ENCODE measurements at regions of chr2 and their contacts with region 1.

Region 1: GRCh38 chr2:197705121-197705911 is at the start of gene MARS2:
- DNase-seq: peak; percentile 92
- H3K4me3 Mint-ChIP-seq: peak within 1 kb of the TSS; percentile 72
- H3K27ac Mint-ChIP-seq: peak within 1 kb of the TSS; percentile 80
- H3K4me1 Mint-ChIP-seq: peaks cover 37% of the 10 kb centered on the region
- H3K27me3 Mint-ChIP-seq: no peaks in the 10 kb centered on the region
- total RNA-seq, gene MARS2: 7.5 to 8.8 TPM

Region 2: GRCh38 chr2:196639180-196640030 is 1065.9 kb before region 1 on chr2 and contains the start of gene CCDC150:
- CTCF ChIA-PET with region 1: no interaction called
- intact Hi-C with region 1: loop called (anchors 1 kb)
- DNase-seq: peak; percentile 97
- H3K4me3 Mint-ChIP-seq: peak within 1 kb of the TSS; percentile 92
- H3K27ac Mint-ChIP-seq: peak within 1 kb of the TSS; percentile 48
- H3K4me1 Mint-ChIP-seq: peaks cover 11% of the 10 kb centered on the region
- H3K27me3 Mint-ChIP-seq: peaks cover 1% of the 10 kb centered on the region
- total RNA-seq, gene CCDC150: 10.1 to 10.8 TPM

Region 3: DNA sequence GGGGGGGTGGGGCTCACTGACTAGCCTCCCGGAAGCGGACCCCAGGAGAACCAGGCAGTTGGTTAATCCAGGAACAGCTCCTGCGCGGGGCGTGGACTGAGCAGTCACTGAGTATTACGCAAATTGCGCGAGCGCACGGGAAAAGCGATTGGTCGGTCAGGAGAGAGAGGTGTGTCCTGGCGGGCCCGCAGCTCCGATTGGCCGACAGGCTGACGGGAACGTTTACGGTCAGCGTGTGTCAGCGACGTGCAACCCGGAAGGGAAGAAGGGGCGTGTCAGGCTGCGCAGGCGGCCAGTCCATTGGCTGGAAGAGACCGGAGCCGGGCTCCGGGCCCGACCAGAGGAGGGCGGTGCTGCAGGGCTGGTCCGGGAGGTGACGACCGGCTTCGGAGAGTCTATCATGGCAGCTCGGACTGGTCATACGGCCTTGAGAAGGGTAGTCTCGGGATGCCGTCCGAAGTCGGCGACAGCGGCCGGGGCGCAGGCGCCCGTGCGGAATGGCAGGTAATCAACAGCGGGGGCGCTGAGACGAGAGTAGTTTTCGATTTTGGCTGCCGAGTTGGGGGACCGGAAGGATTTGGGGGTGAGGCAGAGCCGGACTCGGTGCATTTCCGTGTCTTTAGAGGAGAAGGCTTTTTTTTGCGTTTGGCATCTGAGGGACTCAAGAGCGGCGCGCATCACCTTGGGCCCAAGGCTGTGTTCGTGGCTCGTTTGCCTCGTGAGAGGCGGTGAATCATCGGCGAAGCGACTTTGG is 252.0 kb before region 1 on chr2 and contains the start of gene COQ10B:
- CTCF ChIA-PET with region 1: no interaction called
- intact Hi-C with region 1: loop called (anchors 1 kb)
- DNase-seq: peak; percentile 99
- H3K4me3 Mint-ChIP-seq: peak within 1 kb of the TSS; percentile 100
- H3K27ac Mint-ChIP-seq: peak within 1 kb of the TSS; percentile 100
- H3K4me1 Mint-ChIP-seq: peaks cover 45% of the 10 kb centered on the region
- H3K27me3 Mint-ChIP-seq: no peaks in the 10 kb centered on the region
- total RNA-seq, gene COQ10B: 17.5 to 17.8 TPM

Region 4: GRCh38 chr2:197777823-197778407 is 72.6 kb after region 1 on chr2:
- CTCF ChIA-PET with region 1: interaction called, 22 read pairs
- intact Hi-C with region 1: loop called (anchors 1 kb)
- DNase-seq: peak; percentile 52
- H3K4me3 Mint-ChIP-seq: no peak overlapping the region
- H3K27ac Mint-ChIP-seq: no peak overlapping the region
- H3K4me1 Mint-ChIP-seq: no peaks in the 10 kb centered on the region
- H3K27me3 Mint-ChIP-seq: peaks cover 5% of the 10 kb centered on the region

Region 5: GRCh38 chr2:197851451-197851850 is 146.1 kb after region 1 on chr2:
- CTCF ChIA-PET with region 1: no interaction called
- intact Hi-C with region 1: loop called (anchors 5 kb)
- DNase-seq: peak; percentile 52
- H3K4me3 Mint-ChIP-seq: no peak overlapping the region
- H3K27ac Mint-ChIP-seq: no peak overlapping the region
- H3K4me1 Mint-ChIP-seq: peaks cover 89% of the 10 kb centered on the region
- H3K27me3 Mint-ChIP-seq: no peaks in the 10 kb centered on the region

Region 6: GRCh38 chr2:198127627-198128026 is 422.3 kb after region 1 on chr2:
- CTCF ChIA-PET with region 1: interaction called, 3 read pairs
- intact Hi-C with region 1: loop called (anchors 1 kb)
- DNase-seq: peak; percentile 68
- H3K4me3 Mint-ChIP-seq: no peak overlapping the region
- H3K27ac Mint-ChIP-seq: no peak overlapping the region
- H3K4me1 Mint-ChIP-seq: no peaks in the 10 kb centered on the region
- H3K27me3 Mint-ChIP-seq: no peaks in the 10 kb centered on the region